ENCODE measurements at regions of chr3 and their contacts with region 1.

Region 1: GRCh38 chr3:170848292-170848917 is 21.6 kb downstream of the RPL22L1 start:
- DNase-seq: no peak
- ATAC-seq: 0 out of 2 replicates have a peak, but pooled peaks have one; percentile 63
- H3K4me3 ChIP-seq: no peak overlapping the region
- H3K27ac ChIP-seq: no peak overlapping the region
- H3K4me1 ChIP-seq: no peaks in the 10 kb centered on the region
- H3K27me3 ChIP-seq: peaks cover 6% of the 10 kb centered on the region
- CTCF ChIP-seq: peak; percentile 69; the same call in 1 of the 2 replicates

Region 2: GRCh38 chr3:170405101-170405500 is 443.3 kb before region 1 on chr3:
- CTCF ChIA-PET with region 1: no interaction called
- POLR2A ChIA-PET with region 1: no interaction called
- in situ Hi-C with region 1: loop called (anchors 10 kb)
- intact Hi-C with region 1: no loop called
- DNase-seq: no peak
- ATAC-seq: no peak
- H3K4me3 ChIP-seq: no peak overlapping the region
- H3K27ac ChIP-seq: no peak overlapping the region
- H3K4me1 ChIP-seq: no peaks in the 10 kb centered on the region
- H3K27me3 ChIP-seq: no peaks in the 10 kb centered on the region
- CTCF ChIP-seq: no peak

Region 3: GRCh38 chr3:170876537-170876936 is 28.1 kb after region 1 on chr3:
- CTCF ChIA-PET with region 1: no interaction called
- POLR2A ChIA-PET with region 1: no interaction called
- in situ Hi-C with region 1: no loop called
- intact Hi-C with region 1: no loop called
- DNase-seq: no peak
- ATAC-seq: no peak
- H3K4me3 ChIP-seq: no peak overlapping the region
- H3K27ac ChIP-seq: no peak overlapping the region
- H3K4me1 ChIP-seq: peaks cover 3% of the 10 kb centered on the region; the same call in 1 of the 2 replicates
- H3K27me3 ChIP-seq: no peaks in the 10 kb centered on the region
- CTCF ChIP-seq: no peak

Measured in Panc1 (cell line).